H1 (cell line): ENCODE measurements at regions of chr7 and their contacts with region 1.

Region 1: GRCh38 chr7:5677538-5678294 is 103.7 kb downstream of the RNF216 start:
- DNase-seq: peak in 1 of 2 experiments; percentile 78
- H3K4me3 ChIP-seq: no peak overlapping the region
- H3K27ac ChIP-seq: no peak overlapping the region
- H3K4me1 ChIP-seq: peaks cover 2 to 10% (median 6%) of the 10 kb centered on the region in 4 experiments; a peak in 6 of 7 replicates
- H3K27me3 ChIP-seq: no peaks in the 10 kb centered on the region
- CTCF ChIP-seq: peak; percentile 33 to 86 (median 77)
- EP300 ChIP-seq: no peak
- POLR2A ChIP-seq: no peak
- RAD21 ChIP-seq: peak; percentile 90 to 92

Region 2: GRCh38 chr7:5599543-5600200 is 78.0 kb before region 1 on chr7:
- CTCF ChIA-PET with region 1: interaction called, 13 read pairs
- POLR2A ChIA-PET with region 1: interaction called, 4 read pairs
- DNase-seq: no peak
- H3K4me3 ChIP-seq: no peak overlapping the region
- H3K27ac ChIP-seq: no peak overlapping the region
- H3K4me1 ChIP-seq: peaks cover 0 to 34% (median 27%) of the 10 kb centered on the region in 4 experiments; a peak in 6 of 7 replicates
- H3K27me3 ChIP-seq: no peaks in the 10 kb centered on the region; a peak in 1 of 7 replicates
- CTCF ChIP-seq: no peak
- EP300 ChIP-seq: no peak
- POLR2A ChIP-seq: no peak
- RAD21 ChIP-seq: no peak

Region 3: GRCh38 chr7:5615190-5616070 is 62.3 kb before region 1 on chr7:
- CTCF ChIA-PET with region 1: interaction called, 16 read pairs
- POLR2A ChIA-PET with region 1: no interaction called
- DNase-seq: no peak
- H3K4me3 ChIP-seq: no peak overlapping the region
- H3K27ac ChIP-seq: no peak overlapping the region
- H3K4me1 ChIP-seq: peaks cover 0 to 4% (median under 1%) of the 10 kb centered on the region in 4 experiments; a peak in 3 of 7 replicates
- H3K27me3 ChIP-seq: no peaks in the 10 kb centered on the region
- CTCF ChIP-seq: no peak
- EP300 ChIP-seq: no peak
- POLR2A ChIP-seq: no peak
- RAD21 ChIP-seq: no peak

Region 4: DNA sequence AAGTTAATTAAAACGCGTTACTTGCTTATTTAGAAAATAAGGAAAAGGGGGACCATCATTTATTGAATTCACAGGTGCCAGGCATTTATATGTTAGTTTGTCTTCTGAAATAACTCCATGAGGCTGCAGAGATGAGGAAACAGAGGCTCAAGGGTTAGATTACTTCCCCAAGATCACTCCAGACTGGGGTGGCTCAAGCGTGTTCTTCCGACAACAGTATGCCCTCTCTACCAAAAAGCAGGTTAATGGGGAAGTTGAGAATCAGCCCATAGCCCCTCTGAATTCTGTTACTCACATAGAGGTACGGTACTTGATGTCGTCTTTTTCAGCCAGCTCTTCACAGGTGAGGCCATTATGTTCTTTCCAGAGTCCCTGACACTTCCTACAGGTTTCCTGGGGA is 25.6 kb before region 1 on chr7:
- CTCF ChIA-PET with region 1: interaction called, 10 read pairs
- POLR2A ChIA-PET with region 1: no interaction called
- DNase-seq: no peak
- H3K4me3 ChIP-seq: no peak overlapping the region
- H3K27ac ChIP-seq: no peak overlapping the region
- H3K4me1 ChIP-seq: peaks cover 0 to 8% (median 0%) of the 10 kb centered on the region in 4 experiments; a peak in 2 of 7 replicates
- H3K27me3 ChIP-seq: no peaks in the 10 kb centered on the region
- CTCF ChIP-seq: no peak
- EP300 ChIP-seq: no peak
- POLR2A ChIP-seq: no peak
- RAD21 ChIP-seq: no peak

Region 5: DNA sequence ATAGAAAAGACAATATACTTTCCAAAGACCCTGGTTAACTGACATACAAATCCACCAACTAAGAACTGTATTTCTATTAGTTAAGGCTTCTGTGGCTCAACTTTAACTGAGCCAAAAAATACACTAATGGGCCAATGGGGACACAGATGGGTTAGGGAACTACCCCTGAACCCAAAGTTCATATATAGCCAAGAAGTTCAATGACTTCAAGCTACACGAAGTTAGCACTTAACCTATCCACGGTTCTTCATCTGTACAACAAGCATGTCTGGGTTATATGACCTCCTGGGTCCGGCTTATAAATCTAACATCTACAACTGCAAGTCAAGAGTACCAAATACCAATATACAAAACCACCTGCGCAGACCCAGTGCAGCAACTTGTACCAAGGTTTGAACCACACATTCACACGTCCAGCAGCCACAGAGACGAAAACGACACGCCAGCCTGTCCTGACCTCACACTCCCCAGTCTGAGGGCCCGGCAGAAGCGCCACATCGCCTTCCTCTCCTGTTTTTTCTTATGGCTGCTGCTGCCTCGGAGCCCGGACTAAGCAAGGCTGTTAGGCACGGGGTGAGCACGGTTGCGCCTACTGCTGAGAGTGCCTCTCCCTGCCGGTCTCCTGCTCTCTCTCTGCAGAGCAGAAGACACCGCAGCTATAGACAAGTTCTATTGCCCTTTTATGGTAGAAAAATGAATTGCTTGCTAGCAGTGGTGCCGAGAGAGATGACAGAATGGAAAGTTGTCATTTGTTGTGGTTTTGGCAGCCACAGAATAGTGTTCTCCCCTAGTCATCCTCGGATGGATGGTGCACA is 17.4 kb after region 1 on chr7:
- CTCF ChIA-PET with region 1: interaction called, 18 read pairs
- POLR2A ChIA-PET with region 1: interaction called, 5 read pairs
- DNase-seq: no peak
- H3K4me3 ChIP-seq: no peak overlapping the region
- H3K27ac ChIP-seq: no peak overlapping the region
- H3K4me1 ChIP-seq: no peaks in the 10 kb centered on the region
- H3K27me3 ChIP-seq: no peaks in the 10 kb centered on the region
- CTCF ChIP-seq: no peak
- EP300 ChIP-seq: no peak
- POLR2A ChIP-seq: no peak
- RAD21 ChIP-seq: no peak

Region 6: GRCh38 chr7:5704534-5704922 is 26.8 kb after region 1 on chr7:
- CTCF ChIA-PET with region 1: interaction called, 33 read pairs
- POLR2A ChIA-PET with region 1: interaction called, 3 read pairs
- DNase-seq: peak; percentile 44 to 71
- H3K4me3 ChIP-seq: no peak overlapping the region
- H3K27ac ChIP-seq: no peak overlapping the region
- H3K4me1 ChIP-seq: peaks cover 0 to 3% (median under 1%) of the 10 kb centered on the region in 4 experiments; a peak in 1 of 7 replicates
- H3K27me3 ChIP-seq: no peaks in the 10 kb centered on the region
- CTCF ChIP-seq: peak in 2 of 3 experiments; percentile 81 to 91; a peak in 3 of 4 replicates
- EP300 ChIP-seq: no peak
- POLR2A ChIP-seq: no peak
- RAD21 ChIP-seq: peak; percentile 90

Region 7: GRCh38 chr7:5755704-5756504 is 78.2 kb after region 1 on chr7:
- CTCF ChIA-PET with region 1: no interaction called
- POLR2A ChIA-PET with region 1: no interaction called
- DNase-seq: no peak
- H3K4me3 ChIP-seq: no peak overlapping the region
- H3K27ac ChIP-seq: no peak overlapping the region
- H3K4me1 ChIP-seq: no peaks in the 10 kb centered on the region
- H3K27me3 ChIP-seq: no peaks in the 10 kb centered on the region
- CTCF ChIP-seq: no peak
- EP300 ChIP-seq: no peak
- POLR2A ChIP-seq: no peak
- RAD21 ChIP-seq: no peak

Region 8: DNA sequence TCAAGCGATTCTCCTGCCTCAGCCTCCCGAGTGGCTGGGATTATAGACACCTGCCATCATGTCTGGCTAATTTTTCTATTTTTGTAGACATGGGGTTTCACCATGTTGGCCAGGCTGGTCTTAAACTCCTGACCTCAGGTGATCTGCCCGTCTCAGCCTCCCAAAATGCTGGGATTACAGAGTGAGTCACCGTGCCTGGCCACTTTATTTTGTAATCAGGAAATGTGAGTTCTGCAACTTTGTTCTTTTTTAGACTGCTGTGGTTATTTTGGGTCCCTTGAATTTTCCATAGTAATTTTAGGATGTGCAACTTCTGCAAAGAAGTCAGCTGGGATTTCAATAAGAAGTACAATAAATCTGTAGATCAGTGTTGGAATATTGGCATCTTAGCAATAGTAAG is 497.9 kb after region 1 on chr7:
- CTCF ChIA-PET with region 1: no interaction called
- POLR2A ChIA-PET with region 1: no interaction called
- DNase-seq: no peak
- H3K4me3 ChIP-seq: no peak overlapping the region
- H3K27ac ChIP-seq: no peak overlapping the region
- H3K4me1 ChIP-seq: peaks cover 0 to 17% (median 12%) of the 10 kb centered on the region in 4 experiments; a peak in 5 of 7 replicates
- H3K27me3 ChIP-seq: no peaks in the 10 kb centered on the region
- CTCF ChIP-seq: no peak
- EP300 ChIP-seq: no peak
- POLR2A ChIP-seq: no peak
- RAD21 ChIP-seq: no peak